Dendritic cell treated with granulocyte-macrophage colony-stimulating factor and Interleukin-4, amounts not matched to agents 40 ng/mL and 50 ng/mL, for 4 days (primary cell): ENCODE measurements at regions of chr6 and their contacts with region 1.

Region 1: DNA sequence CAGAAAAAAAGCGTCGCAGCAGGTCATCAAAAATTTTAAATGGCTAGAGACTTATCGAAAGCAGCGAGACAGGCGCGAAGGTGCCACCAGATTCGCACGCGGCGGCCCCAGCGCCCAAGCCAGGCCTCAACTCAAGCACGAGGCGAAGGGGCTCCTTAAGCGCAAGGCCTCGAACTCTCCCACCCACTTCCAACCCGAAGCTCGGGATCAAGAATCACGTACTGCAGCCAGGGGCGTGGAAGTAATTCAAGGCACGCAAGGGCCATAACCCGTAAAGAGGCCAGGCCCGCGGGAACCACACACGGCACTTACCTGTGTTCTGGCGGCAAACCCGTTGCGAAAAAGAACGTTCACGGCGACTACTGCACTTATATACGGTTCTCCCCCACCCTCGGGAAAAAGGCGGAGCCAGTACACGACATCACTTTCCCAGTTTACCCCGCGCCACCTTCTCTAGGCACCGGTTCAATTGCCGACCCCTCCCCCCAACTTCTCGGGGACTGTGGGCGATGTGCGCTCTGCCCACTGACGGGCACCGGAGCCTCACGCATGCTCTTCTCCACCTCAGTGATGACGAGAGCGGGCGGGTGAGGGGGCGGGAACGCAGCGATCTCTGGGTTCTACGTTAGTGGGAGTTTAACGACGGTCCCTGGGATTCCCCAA is at the start of gene EEF1A1:
- H3K4me3 Mint-ChIP-seq: peak within 1 kb of the TSS; percentile 99
- H3K27ac Mint-ChIP-seq: peak within 1 kb of the TSS; percentile 100
- H3K4me1 Mint-ChIP-seq: peaks cover 37% of the 10 kb centered on the region
- H3K27me3 Mint-ChIP-seq: no peaks in the 10 kb centered on the region

Region 2: GRCh38 chr6:73491377-73491776 is 29.4 kb before region 1 on chr6:
- intact Hi-C with region 1: no loop called
- H3K4me3 Mint-ChIP-seq: no peak overlapping the region
- H3K27ac Mint-ChIP-seq: no peak overlapping the region
- H3K4me1 Mint-ChIP-seq: no peaks in the 10 kb centered on the region
- H3K27me3 Mint-ChIP-seq: no peaks in the 10 kb centered on the region

Region 3: GRCh38 chr6:73569121-73569520 is 48.3 kb after region 1 on chr6:
- intact Hi-C with region 1: no loop called
- H3K4me3 Mint-ChIP-seq: no peak overlapping the region
- H3K27ac Mint-ChIP-seq: no peak overlapping the region
- H3K4me1 Mint-ChIP-seq: peaks cover 34% of the 10 kb centered on the region
- H3K27me3 Mint-ChIP-seq: no peaks in the 10 kb centered on the region

Region 4: DNA sequence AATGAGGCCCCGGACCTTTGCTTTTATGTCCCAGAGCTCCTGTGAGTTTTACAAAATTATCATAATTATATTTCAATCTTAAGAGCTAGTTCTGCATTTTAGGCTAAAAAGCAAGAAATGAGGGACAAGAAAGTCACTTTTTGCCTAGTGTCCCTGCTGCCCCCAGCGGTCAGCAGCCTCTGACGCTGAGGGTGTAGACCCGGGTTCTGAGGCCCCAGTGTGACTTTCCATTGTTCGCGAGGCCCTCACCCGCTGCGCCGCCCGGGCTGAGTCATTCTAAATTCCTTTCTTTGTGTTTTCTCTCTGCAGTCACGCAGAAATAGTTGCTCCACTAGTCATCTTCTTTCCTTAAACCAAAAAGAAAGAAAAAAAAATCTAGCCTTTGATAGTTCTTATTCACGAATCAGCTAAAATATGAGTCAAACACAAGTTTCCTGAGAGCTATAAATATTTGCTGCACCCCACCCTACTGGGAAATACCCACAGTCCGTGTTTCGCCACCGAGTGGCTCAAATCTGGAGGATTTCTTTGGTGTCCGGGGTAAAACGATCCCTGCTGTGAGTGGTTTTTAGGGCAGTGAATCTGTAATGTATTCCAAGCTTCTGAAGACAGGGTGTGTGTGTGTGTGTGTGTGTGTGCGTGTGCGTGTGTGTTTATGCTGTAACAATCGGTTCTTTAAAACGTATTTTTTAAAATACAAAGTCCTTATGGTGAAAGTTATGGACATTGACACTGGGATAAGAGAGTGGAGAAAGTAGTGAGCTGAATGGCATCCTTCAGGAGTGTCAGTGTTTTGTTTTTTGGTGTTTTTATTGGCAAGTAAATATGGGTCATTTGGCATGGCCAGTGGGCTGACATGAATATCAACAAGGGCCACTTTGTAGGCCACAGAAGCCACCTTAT is 59.7 kb after region 1 on chr6:
- intact Hi-C with region 1: loop called (anchors 1 kb)
- H3K4me3 Mint-ChIP-seq: peak overlapping the region; percentile 71
- H3K27ac Mint-ChIP-seq: peak overlapping the region; percentile 99
- H3K4me1 Mint-ChIP-seq: peaks cover 36% of the 10 kb centered on the region
- H3K27me3 Mint-ChIP-seq: no peaks in the 10 kb centered on the region

Region 5: DNA sequence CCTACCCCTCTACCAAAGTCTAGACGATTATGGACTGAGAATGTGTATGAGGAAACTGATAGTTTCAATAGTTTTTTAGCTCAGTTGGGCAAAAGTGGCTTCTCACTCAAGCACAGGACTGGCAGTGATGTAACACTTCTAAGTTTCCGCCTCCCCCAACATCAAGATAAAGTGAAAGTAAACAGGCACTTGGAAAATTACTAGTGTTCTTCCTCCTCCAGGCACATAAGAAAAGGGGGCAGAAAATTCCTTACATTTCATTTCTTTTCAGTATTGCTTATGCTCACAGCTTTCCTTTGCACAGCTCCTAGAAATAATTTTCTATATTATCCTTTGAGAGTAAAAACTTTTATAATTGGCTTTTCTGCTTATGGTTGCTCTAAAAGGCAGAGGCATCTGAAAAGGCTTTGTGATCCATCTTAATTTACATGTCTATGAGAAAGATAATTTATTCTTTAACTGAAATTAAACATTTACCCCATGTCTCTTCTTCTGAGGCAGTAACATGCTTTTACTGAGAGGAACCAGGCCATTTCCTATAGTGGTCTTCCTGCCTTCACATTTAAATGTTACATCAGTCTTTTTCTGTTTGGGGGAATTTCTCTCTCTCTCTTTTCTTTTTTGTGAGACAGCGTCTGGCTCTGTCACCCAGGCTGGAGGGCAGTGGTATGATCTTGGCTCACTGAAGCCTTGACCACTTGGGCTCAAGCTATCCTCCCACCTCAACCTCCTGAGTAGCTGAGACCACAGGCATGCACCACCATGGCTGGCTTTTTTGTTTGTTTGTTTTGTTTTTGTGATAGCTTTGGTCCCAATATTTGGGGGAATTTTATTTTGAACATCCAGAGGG is 65.0 kb after region 1 on chr6:
- intact Hi-C with region 1: loop called (anchors 1 kb)
- H3K4me3 Mint-ChIP-seq: peak overlapping the region; percentile 64
- H3K27ac Mint-ChIP-seq: peak overlapping the region; percentile 90
- H3K4me1 Mint-ChIP-seq: peaks cover 28% of the 10 kb centered on the region
- H3K27me3 Mint-ChIP-seq: no peaks in the 10 kb centered on the region